ENCODE measurements at regions of chr6 and their contacts with region 1.

Region 1: GRCh38 chr6:98764373-98764911 is 69.9 kb upstream of the POU3F2 start:
- DNase-seq: no peak
- H3K4me3 ChIP-seq: peak overlapping the region; percentile 47; the same call in 1 of the 2 replicates
- H3K27ac ChIP-seq: no peak overlapping the region
- H3K4me1 ChIP-seq: no peaks in the 10 kb centered on the region
- H3K27me3 ChIP-seq: no peaks in the 10 kb centered on the region
- CTCF ChIP-seq: no peak

Region 2: GRCh38 chr6:98601716-98602115 is 162.7 kb before region 1 on chr6:
- CTCF ChIA-PET with region 1: no interaction called
- POLR2A ChIA-PET with region 1: no interaction called
- intact Hi-C with region 1: no loop called
- DNase-seq: no peak
- H3K4me3 ChIP-seq: no peak overlapping the region
- H3K27ac ChIP-seq: no peak overlapping the region
- H3K4me1 ChIP-seq: no peaks in the 10 kb centered on the region
- H3K27me3 ChIP-seq: no peaks in the 10 kb centered on the region
- CTCF ChIP-seq: no peak

Region 3: DNA sequence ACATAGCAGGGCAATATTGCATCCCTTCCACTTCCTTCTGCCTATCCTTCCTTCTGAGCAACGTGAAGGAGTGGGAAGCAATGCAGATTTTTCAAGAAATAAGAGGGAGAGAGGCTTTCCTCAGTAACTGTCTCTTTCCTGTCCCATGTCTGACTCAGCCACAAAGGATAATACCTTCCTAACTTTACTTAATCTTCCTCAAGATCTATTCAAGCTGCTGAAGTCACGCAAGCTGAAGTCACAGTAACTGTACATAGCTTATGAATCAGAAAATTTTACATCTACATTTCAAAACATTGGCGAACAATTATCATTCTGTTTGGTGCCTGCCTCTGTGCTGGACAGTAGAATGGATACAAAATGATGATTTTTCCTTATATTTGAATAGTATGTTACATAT is 16.5 kb before region 1 on chr6:
- CTCF ChIA-PET with region 1: no interaction called
- POLR2A ChIA-PET with region 1: interaction called, 10 read pairs
- intact Hi-C with region 1: no loop called
- DNase-seq: no peak
- H3K4me3 ChIP-seq: no peak overlapping the region
- H3K27ac ChIP-seq: no peak overlapping the region
- H3K4me1 ChIP-seq: no peaks in the 10 kb centered on the region
- H3K27me3 ChIP-seq: no peaks in the 10 kb centered on the region
- CTCF ChIP-seq: no peak

Region 4: DNA sequence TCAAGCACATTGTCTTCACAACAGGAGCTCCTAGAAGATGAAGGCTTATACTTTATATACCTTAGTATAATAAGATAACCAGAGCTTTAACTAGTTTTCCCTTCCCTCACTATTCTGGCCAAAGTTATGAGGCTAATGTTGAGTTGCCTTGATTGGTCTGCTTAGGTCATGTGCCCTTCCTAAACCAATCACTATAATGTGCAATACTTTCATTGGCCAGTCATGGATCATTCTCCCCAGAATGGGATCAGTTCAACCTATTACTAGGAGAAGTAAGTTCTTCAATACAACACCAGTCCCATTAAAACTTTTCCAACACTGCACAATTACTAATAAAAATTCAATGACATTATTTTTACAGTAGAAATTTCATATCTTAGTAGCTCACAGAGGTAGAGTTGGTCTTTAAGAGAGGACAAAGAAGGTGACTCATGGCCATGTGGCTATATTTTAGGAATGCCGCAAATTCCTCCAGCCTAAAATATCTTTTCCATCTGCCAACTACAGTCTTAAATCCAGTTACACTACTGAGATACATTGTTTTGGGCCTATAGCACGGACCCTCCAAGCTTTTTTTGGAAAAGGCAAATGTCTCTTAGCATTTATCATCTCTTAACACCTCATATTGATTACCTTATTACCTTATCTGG is 57.4 kb after region 1 on chr6:
- CTCF ChIA-PET with region 1: no interaction called
- POLR2A ChIA-PET with region 1: no interaction called
- intact Hi-C with region 1: no loop called
- DNase-seq: no peak
- H3K4me3 ChIP-seq: no peak overlapping the region
- H3K27ac ChIP-seq: no peak overlapping the region
- H3K4me1 ChIP-seq: no peaks in the 10 kb centered on the region
- H3K27me3 ChIP-seq: peaks cover 16% of the 10 kb centered on the region; the same call in 1 of the 2 replicates
- CTCF ChIP-seq: no peak